ENCODE measurements at regions of chr19 and their contacts with region 1.

Region 1: DNA sequence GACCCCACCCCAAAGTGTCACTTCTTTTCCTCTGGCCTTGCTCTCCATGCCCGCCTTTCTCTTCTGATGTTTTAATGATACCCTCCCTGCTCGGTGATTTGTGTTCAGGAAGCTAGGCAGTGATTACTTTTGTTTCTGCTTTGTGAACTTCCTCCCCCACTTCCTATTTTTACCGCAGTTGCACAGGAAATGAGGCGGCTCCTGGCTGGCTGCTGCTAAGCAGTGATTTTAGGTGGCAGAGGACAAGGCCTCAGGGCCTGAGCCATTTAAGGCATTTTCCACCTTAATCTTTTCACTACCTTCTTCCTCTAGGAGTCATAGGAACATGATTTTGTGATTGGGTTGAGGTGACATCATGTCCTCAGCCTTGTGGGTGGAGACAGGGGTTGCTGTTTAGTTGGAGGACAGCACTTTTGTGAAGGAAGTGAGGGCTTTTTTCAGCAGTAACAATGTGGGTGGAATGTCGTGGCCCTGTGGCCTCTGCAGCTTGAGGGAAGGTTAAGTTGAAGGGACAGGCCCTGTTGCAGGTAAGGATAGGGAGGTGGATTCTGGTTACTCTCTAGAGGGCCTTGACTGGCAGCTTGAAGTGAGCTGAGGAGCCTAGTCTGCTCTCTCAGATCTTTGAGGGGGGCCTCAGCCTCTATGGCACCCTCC is 15.7 kb downstream of the GARRE1 start:
- DNase-seq: peak; percentile 27 to 64
- ATAC-seq: peak; percentile 28 to 56 (median 51)
- H3K4me3 ChIP-seq: peak overlapping the region; percentile 6
- H3K27ac ChIP-seq: peak overlapping the region; percentile 71
- H3K4me1 ChIP-seq: peaks cover 58% of the 10 kb centered on the region
- H3K27me3 ChIP-seq: no peaks in the 10 kb centered on the region
- CTCF ChIP-seq: no peak

Region 2: DNA sequence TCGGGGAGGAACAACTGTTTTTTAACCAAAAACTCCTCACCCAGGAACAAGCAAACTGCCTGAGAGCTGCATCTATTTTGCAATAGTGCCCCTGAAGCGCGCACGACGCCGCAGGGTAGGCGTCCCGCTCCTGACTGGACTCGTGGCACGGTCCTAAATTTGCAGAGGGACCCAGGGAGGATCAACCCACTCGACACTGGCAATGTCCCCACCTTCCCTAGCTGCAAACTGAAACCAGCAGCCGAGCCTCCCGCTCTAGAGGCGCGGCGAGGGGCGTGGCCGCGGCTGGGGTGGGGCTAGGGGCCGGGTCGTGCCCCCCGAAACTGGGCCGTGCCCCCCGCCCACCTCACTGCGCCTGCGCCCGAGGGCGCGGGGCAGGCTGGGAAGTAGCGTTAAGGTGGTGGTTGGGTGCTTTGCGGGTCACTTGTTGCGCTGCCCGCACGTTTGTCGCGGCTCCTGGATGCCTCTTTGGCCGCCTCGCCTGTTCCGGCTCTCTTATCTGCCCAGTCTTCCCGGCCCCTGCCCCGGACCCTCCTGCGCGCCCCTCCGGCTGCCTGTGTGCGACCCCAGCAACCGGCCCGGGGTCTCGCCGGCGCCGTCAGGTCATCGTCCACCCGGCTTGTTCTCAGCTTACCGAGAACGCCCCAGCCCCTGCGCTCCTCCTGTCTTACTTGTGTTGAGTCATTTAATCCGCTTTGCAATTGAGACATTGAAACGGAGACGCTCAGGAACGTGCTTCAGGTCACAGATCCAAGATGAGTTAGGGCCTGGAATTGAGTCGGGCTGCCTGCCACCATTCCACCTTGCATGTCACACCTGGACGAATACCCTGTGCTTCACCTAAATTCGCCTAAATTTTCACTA is 135.7 kb before region 1 on chr19:
- intact Hi-C with region 1: no loop called
- DNase-seq: peak; percentile 88 to 92
- ATAC-seq: peak; percentile 96 to 98 (median 96)
- H3K4me3 ChIP-seq: peak overlapping the region; percentile 83
- H3K27ac ChIP-seq: peak overlapping the region; percentile 84
- H3K4me1 ChIP-seq: peaks cover 4% of the 10 kb centered on the region
- H3K27me3 ChIP-seq: no peaks in the 10 kb centered on the region
- CTCF ChIP-seq: no peak

Region 3: GRCh38 chr19:34310471-34310981 is 40.4 kb after region 1 on chr19:
- intact Hi-C with region 1: loop called (anchors 5 kb)
- DNase-seq: no peak
- ATAC-seq: peak in 2 of 4 donors; percentile 33 to 38
- H3K4me3 ChIP-seq: no peak overlapping the region
- H3K27ac ChIP-seq: no peak overlapping the region
- H3K4me1 ChIP-seq: peaks cover 34% of the 10 kb centered on the region
- H3K27me3 ChIP-seq: no peaks in the 10 kb centered on the region
- CTCF ChIP-seq: no peak

Region 4: DNA sequence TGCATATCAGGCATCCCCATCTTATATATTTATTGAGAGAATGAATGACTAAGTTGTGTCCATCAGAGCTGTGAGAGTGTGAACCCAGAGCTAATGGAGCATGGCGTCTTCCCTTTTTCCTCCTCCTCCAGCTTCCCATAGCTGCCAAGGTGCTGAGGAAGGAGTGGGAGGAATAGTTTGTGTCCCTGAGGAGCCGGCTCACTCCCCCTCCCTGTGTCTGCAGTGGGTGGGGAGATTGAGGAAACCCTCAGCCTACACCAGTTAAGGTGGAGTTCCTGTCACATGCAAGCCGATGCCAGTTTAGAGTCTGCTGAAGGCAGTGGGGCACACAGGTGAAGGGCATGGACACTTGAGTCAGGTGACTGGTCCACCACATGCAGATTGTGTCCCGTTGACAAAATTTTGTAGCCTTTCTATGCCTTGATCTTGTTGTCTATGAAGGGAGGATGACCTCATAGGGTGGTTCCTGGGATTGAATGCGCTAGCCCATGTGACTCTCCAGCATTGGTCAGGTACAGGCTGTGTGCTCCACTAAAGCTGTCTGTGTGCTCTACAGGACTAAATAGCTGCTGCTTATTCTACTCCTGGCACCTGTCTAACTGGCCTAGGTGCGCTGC is 47.3 kb after region 1 on chr19:
- intact Hi-C with region 1: loop called (anchors 5 kb)
- DNase-seq: no peak
- ATAC-seq: peak; percentile 62 to 74 (median 68)
- H3K4me3 ChIP-seq: no peak overlapping the region
- H3K27ac ChIP-seq: peak overlapping the region; percentile 72
- H3K4me1 ChIP-seq: peaks cover 52% of the 10 kb centered on the region
- H3K27me3 ChIP-seq: no peaks in the 10 kb centered on the region
- CTCF ChIP-seq: no peak

Measured in psoas muscle (tissue), 8 donors.